ENCODE measurements at regions of chr1 and their contacts with region 1.

Region 1: DNA sequence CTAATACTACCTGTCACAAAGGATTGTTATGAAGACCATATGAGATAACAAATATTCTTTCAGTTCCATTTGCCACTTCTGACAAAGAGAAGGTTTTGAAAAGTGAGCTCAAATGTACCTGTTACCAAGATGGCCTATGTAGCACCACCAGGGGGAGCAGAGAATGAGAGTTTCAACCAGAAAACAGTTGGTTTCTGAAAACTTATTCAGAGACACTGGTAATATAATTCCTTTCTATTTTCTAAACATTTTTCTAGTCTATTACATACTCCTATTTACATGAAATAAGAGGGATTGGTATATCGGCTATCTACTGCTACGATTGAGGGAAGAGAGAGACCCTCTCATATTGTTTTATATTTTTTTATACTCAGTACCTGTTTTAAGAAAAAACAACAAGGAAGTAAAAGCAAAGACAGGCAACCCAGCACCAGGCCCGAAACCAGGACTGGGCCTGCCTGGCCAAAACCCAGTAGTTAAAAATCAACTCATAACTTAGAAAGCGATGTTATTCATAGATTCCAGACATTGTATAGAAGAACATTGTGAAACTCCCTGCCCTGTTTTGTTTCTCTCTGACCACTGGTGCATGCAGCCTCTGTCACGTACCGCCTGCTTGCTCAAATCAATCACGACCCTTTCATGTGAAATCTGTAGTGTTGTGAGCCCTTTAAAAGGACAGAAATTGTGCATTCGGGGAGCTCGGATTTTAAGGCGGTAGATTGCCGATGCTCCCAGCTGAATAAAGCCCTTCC is 48.3 kb downstream of the IL23R start:
- DNase-seq: no peak
- H3K4me3 ChIP-seq: no peak overlapping the region
- H3K27ac ChIP-seq: no peak overlapping the region
- H3K27me3 ChIP-seq: peaks cover 6% of the 10 kb centered on the region
- CTCF ChIP-seq: peak; percentile 73

Region 2: DNA sequence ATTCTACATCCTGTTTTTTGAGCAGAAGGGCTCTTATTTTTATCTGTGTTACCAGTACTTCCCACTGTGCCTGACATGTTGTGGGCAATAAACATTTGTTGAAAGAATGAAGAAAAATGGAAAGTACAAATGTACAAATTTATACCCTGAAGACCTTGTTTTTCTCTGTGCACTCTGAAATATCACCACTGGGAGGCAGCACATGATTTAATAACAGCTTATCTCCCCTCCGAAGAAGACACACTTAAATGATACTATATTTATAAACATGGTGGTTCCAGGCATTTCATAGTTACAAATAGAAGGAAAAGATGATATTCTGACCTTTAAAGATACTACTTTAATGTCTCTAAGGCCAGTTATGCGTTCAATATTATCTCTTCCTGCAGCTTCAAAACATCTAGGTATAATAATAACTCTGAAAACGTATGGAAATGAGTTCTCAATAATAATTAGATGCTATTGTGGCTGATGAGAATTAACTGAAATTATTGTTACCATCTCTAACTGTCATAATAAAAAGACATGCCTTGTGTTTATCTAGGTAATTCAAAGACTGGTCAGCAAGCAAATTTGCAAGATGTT is 449.5 kb before region 1 on chr1:
- CTCF ChIA-PET with region 1: interaction called, 134 read pairs
- POLR2A ChIA-PET with region 1: no interaction called
- DNase-seq: peak; percentile 29
- H3K4me3 ChIP-seq: no peak overlapping the region
- H3K27ac ChIP-seq: no peak overlapping the region
- H3K27me3 ChIP-seq: no peaks in the 10 kb centered on the region
- CTCF ChIP-seq: peak; percentile 78

Region 3: DNA sequence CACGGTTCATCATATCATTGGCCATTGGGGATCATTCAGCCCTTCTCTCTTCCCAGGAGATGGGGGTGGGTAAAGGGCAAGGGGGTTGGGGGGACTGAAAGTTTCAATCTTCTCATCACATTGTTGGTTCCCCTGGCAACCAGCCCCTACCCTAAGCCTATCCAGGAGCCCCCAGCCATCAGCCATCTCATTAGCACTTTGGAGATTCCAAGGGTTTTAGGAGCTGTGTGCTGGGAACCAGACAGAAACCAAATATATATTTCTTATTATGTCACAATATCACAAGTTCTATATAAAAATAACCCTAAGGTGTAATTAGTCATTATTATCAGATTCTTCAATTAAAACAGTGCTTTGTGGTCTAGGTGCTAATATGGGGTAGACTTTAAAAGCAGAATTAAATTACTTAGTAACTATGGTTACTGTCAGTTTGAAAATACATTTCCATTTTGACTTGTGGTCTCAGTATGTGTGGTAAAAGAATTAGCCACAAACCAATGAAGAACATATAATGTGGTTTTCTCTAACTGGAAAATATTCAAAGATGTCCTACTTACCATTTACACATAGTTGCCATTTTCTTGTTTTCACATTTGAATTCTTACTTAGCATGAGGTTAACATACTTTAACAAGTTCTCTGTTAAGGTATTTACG is 20.3 kb before region 1 on chr1:
- CTCF ChIA-PET with region 1: interaction called, 14 read pairs
- POLR2A ChIA-PET with region 1: no interaction called
- DNase-seq: no peak
- H3K4me3 ChIP-seq: no peak overlapping the region
- H3K27ac ChIP-seq: no peak overlapping the region
- H3K27me3 ChIP-seq: peaks cover 4% of the 10 kb centered on the region
- CTCF ChIP-seq: no peak

Region 4: GRCh38 chr1:67224856-67225255 is 10.3 kb after region 1 on chr1:
- CTCF ChIA-PET with region 1: interaction called, 14 read pairs
- POLR2A ChIA-PET with region 1: no interaction called
- DNase-seq: no peak
- H3K4me3 ChIP-seq: no peak overlapping the region
- H3K27ac ChIP-seq: no peak overlapping the region
- H3K27me3 ChIP-seq: peaks cover 6% of the 10 kb centered on the region
- CTCF ChIP-seq: no peak

Region 5: DNA sequence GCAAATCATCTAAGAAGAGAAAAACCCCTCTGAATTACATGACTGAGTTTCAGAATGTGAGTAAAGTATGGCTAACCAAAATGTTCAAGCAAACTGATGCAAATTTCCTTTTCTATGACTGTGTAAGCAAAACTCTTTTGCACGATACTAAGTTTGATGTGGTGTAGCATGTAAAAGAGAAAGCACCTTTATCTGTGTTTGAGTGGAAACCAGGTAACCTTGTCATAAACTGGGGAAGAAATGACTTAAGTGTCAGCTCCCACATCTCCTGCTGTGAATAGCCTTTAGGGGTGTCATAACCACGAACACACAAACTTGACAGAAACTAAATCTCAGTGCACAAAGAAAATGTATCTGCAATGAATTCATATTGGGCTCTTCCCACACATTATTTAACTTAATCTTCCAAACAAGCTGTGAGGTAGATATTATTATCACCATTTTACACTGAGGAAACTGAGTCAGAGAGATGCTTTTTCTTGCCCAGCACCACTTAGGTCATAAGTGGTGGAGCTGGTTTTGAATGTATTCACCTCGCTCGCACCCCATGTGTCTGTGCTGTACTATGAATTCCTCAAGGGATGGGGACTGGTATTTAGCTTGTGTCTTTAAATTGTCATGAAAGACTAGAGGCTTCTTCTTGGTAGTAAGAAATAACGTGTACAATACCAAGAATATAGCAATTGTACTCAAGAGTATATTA is 60.2 kb after region 1 on chr1:
- CTCF ChIA-PET with region 1: no interaction called
- POLR2A ChIA-PET with region 1: no interaction called
- DNase-seq: no peak
- H3K4me3 ChIP-seq: no peak overlapping the region
- H3K27ac ChIP-seq: no peak overlapping the region
- H3K27me3 ChIP-seq: no peaks in the 10 kb centered on the region
- CTCF ChIP-seq: no peak

Region 6: DNA sequence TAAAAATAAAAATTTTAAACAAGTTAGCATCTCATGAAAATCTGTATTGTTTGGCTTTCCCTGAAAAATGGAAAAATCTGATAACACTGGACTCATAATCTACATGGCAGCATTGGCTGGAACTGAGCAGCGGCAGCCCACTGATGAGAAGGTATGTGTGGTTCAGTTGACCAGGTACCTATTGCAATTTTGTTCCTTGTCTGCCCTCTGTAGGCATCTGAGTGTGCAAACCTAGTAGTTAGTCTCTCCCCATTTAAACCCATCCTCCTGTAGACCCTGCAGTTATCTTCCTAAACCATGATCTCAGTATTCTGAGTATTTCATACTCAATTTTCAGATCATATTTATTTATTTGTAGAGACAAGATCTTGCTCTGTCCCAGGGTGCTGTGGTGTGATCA is 275.0 kb after region 1 on chr1:
- CTCF ChIA-PET with region 1: interaction called, 27 read pairs
- POLR2A ChIA-PET with region 1: no interaction called
- DNase-seq: no peak
- H3K4me3 ChIP-seq: no peak overlapping the region
- H3K27ac ChIP-seq: no peak overlapping the region
- H3K27me3 ChIP-seq: peaks cover 9% of the 10 kb centered on the region
- CTCF ChIP-seq: peak; percentile 36

Region 7: DNA sequence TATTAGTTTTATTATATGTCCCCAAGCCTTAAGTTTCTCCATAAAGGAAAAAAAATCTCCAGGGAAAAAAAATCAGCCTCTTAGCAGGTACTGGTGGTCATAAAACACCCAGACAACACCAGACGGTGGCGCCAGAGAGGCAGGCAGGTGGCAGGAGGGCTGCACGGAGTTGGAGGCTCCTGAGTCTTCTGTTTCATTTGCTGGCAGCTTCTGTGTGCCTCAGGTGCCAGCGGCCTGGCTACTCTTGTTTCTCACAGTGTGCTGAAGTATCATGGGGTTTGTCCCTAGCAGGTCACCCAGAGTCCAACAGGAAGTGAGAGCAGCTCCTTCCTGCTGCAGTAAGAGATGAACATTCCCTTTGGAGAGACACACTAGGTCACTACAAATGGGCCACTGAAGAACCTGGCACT is 347.1 kb after region 1 on chr1:
- CTCF ChIA-PET with region 1: no interaction called
- POLR2A ChIA-PET with region 1: no interaction called
- DNase-seq: peak; percentile 65
- H3K4me3 ChIP-seq: no peak overlapping the region
- H3K27ac ChIP-seq: no peak overlapping the region
- H3K27me3 ChIP-seq: no peaks in the 10 kb centered on the region
- CTCF ChIP-seq: peak; percentile 96

Measured in AG04450 (cell line).